ENCODE measurements at regions of chr14 and their contacts with region 1.

Region 1: GRCh38 chr14:29536886-29537511 is 390.6 kb downstream of the PRKD1 start:
- DNase-seq: peak; percentile 35
- ATAC-seq: no peak
- H3K4me3 ChIP-seq: no peak overlapping the region
- H3K27ac ChIP-seq: no peak overlapping the region
- H3K4me1 ChIP-seq: no peaks in the 10 kb centered on the region
- H3K27me3 ChIP-seq: peaks cover 35% of the 10 kb centered on the region
- CTCF ChIP-seq: peak; percentile 60

Region 2: GRCh38 chr14:28751467-28752058 is 785.4 kb before region 1 on chr14:
- CTCF ChIA-PET with region 1: interaction called, 3 read pairs
- POLR2A ChIA-PET with region 1: no interaction called
- intact Hi-C with region 1: loop called (anchors 1 kb)
- DNase-seq: peak; percentile 81
- ATAC-seq: peak; percentile 90
- H3K4me3 ChIP-seq: no peak overlapping the region
- H3K27ac ChIP-seq: no peak overlapping the region
- H3K4me1 ChIP-seq: no peaks in the 10 kb centered on the region
- H3K27me3 ChIP-seq: peaks cover 23% of the 10 kb centered on the region
- CTCF ChIP-seq: peak; percentile 84

Region 3: GRCh38 chr14:28773861-28774691 is 762.9 kb before region 1 on chr14:
- CTCF ChIA-PET with region 1: no interaction called
- POLR2A ChIA-PET with region 1: no interaction called
- intact Hi-C with region 1: loop called (anchors 5 kb)
- DNase-seq: no peak
- ATAC-seq: peak; percentile 63
- H3K4me3 ChIP-seq: no peak overlapping the region
- H3K27ac ChIP-seq: no peak overlapping the region
- H3K4me1 ChIP-seq: no peaks in the 10 kb centered on the region
- H3K27me3 ChIP-seq: peaks cover 98% of the 10 kb centered on the region
- CTCF ChIP-seq: no peak